ACHN (cell line): ENCODE measurements at regions of chr3 and their contacts with region 1.

Region 1: GRCh38 chr3:194166682-194167479 is 30.9 kb downstream of the HES1 start:
- DNase-seq: no peak

Region 2: DNA sequence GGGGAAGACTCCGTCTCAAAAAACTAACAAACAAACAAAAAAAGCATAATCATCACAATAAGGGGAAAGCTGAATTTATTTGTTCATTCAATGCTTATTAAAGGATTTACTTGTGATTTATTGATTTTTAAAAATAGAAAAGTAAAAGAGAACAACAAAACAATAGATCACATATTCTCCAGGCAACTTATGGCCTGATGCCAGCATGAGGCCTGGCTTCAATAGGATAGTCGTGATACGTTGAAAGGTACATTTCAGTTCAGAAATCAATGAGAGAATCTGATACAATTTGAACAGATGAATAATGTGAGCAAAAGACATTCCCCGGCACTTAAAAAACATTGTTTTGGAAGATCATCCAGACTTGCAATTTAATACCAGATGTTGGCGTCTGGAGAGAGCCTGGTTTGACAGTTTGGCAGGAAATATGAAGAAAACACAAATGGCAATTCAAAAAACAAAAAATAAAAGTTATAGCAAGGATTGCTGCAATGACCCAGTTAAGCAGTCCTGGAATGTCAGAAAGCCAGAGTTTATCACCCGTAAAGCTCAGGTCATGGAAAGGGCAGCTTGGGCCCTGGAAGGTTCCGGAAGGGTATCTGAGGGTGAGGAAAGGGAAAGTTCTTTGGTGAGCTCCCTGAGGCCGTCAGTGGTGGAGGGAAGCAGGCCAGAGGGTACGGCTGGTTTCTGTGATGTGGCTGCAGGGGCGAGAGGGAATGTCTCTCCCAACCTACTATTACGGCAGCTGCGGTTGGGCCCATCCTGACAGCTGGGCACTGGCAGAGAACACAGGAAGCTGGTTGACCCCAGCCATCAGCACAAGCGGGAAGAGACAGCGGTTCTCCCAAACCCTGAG is 261.1 kb before region 1 on chr3:
- in situ Hi-C with region 1: no loop called
- DNase-seq: no peak

Region 3: GRCh38 chr3:193971261-193971751 is 195.6 kb before region 1 on chr3:
- in situ Hi-C with region 1: no loop called
- DNase-seq: no peak

Region 4: GRCh38 chr3:194315088-194315964 is 148.4 kb after region 1 on chr3:
- in situ Hi-C with region 1: loop called (anchors 25 kb)
- DNase-seq: peak; percentile 73

Region 5: GRCh38 chr3:194431553-194431952 is 264.7 kb after region 1 on chr3:
- in situ Hi-C with region 1: no loop called
- DNase-seq: no peak